PC-9 (cell line): ENCODE measurements at regions of chr15 and their contacts with region 1.

Region 1: GRCh38 chr15:71559098-71559497 is 251.3 kb upstream of the NR2E3 start:
- DNase-seq: no peak
- H3K4me3 ChIP-seq: no peak overlapping the region
- H3K27ac ChIP-seq: no peak overlapping the region
- H3K4me1 ChIP-seq: peaks cover 5% of the 10 kb centered on the region; the same call in 1 of the 2 replicates
- H3K27me3 ChIP-seq: no peaks in the 10 kb centered on the region
- CTCF ChIP-seq: no peak

Region 2: DNA sequence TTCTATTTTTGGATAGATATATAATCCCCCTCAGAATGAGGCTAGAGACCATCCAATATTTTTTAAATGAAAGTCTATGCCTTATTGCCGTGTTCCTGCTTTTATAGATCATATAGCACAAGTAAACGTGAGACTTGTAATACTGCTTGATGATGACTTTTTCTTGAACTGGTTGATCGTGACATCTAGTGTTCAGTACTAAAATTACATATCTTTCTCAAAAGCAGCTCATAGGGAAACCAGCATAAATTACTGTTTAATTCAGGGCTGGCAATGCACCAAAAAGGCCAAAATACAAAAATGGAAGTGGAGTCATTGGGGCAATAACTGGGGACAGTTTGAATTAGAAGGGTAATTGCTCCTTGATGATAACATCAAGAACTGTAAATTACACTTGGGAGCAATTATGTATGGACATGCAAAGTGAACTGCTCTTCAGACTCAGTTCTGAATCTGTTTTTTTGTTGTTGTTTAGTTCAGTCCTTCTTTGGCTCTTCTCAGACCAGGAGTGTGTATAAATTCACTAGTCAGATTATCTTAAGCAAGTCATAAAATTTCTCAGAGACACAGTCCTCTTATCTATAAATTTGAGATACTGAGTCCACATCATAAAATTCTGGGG is 118.5 kb before region 1 on chr15:
- CTCF ChIA-PET with region 1: no interaction called
- POLR2A ChIA-PET with region 1: no interaction called
- intact Hi-C with region 1: no loop called
- DNase-seq: peak in 1 of 2 experiments; percentile 53
- H3K4me3 ChIP-seq: no peak overlapping the region
- H3K27ac ChIP-seq: no peak overlapping the region
- H3K4me1 ChIP-seq: peaks cover 47% of the 10 kb centered on the region
- H3K27me3 ChIP-seq: no peaks in the 10 kb centered on the region
- CTCF ChIP-seq: peak; percentile 71

Region 3: DNA sequence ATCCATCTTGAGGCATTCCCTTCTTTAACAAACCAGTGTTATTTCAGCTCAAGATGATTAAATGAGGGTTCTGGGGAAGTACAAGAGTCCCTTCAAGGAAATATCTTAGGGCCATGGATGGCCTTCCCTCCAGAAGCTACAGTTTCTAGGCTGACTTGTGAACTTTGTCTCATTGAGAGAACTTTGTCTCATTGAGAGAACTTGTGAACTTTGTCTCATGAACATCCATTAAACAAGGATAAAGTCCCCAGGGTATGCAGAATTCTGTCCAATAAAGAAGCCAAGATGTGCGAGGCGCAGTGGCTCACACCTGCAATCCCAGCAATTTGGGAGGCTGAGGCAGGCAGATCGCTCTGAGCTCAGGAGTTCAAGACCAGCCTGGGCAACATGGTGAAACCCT is 102.3 kb before region 1 on chr15:
- CTCF ChIA-PET with region 1: interaction called, 17 read pairs
- POLR2A ChIA-PET with region 1: no interaction called
- intact Hi-C with region 1: no loop called
- DNase-seq: no peak
- H3K4me3 ChIP-seq: no peak overlapping the region
- H3K27ac ChIP-seq: no peak overlapping the region
- H3K4me1 ChIP-seq: peaks cover 14% of the 10 kb centered on the region
- H3K27me3 ChIP-seq: no peaks in the 10 kb centered on the region
- CTCF ChIP-seq: no peak

Region 4: GRCh38 chr15:71883447-71883846 is 324.3 kb after region 1 on chr15:
- CTCF ChIA-PET with region 1: no interaction called
- POLR2A ChIA-PET with region 1: interaction called, 10 read pairs
- intact Hi-C with region 1: no loop called
- DNase-seq: no peak
- H3K4me3 ChIP-seq: no peak overlapping the region
- H3K27ac ChIP-seq: no peak overlapping the region
- H3K4me1 ChIP-seq: no peaks in the 10 kb centered on the region
- H3K27me3 ChIP-seq: no peaks in the 10 kb centered on the region
- CTCF ChIP-seq: no peak